ENCODE measurements at regions of chr6 and their contacts with region 1.

Region 1: DNA sequence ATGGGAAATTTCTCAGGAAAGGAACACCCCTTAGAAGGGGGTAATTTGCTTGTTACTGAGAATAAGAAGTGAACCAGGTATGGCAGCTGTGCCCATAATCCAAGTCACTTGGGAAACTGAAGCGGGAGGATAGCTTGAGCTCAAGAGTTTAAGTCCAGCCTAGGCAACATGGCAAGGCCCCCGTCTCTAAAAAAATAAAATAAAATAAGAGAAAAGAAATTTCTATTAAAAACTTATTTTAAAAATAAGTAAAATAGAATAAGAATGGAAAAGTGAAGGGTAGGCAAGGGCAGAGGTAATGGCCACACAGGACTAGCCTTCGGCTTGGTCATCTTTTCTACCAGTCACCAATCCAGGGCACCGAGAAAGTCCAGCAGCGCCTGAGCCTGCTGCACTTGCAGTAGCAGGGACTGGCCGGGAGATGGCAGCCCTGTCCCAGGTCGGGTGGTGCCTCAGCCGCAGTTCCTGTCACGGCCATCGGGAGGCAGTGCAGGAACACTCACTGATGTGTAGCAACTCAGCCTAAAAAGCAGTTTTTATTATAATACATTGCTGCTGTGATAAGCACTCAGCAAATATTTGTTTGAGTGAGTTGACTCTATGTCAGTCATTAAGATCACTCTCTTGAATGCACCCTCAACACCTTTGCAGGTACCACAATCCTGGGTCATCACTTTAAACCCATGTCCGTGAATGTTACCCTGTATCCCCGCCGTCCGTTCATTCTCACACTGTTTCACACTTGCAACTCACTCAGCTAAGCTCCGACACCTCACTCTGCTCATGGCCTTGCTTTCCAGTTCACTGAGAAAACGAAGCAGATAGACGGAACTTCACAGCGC is 23.2 kb upstream of the GCM1 start:
- DNase-seq: peak; percentile 85 to 97 (median 89)
- ATAC-seq: peak; percentile 100
- H3K4me3 ChIP-seq: no peak overlapping the region
- H3K4me3 Mint-ChIP-seq: no peak overlapping the region
- H3K27ac ChIP-seq: no peak overlapping the region
- H3K27ac Mint-ChIP-seq: no peak overlapping the region
- H3K4me1 ChIP-seq: no peaks in the 10 kb centered on the region
- H3K4me1 Mint-ChIP-seq: no peaks in the 10 kb centered on the region
- H3K27me3 ChIP-seq: no peaks in the 10 kb centered on the region
- H3K27me3 Mint-ChIP-seq: no peaks in the 10 kb centered on the region
- CTCF ChIP-seq: peak; percentile 100

Region 2: DNA sequence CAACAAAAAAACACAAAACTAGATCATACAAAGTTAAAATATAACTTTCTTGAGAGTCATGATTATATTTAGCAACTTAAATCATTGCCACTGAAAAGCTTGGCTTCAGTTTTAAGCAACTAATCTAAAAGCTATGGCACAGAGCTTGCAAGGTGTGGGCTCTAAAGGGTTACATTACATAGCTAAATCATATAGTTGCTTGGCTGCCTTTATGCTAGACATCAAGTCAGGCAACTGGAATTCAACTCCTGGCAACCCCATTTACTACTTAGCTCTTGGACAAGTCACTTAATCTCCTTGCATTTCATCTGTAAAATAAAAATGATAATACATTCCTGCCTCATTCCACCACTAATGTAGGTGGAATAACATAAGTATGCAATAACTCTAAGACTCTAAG is 17.7 kb after region 1 on chr6:
- CTCF ChIA-PET with region 1: interaction called, 12 read pairs
- POLR2A ChIA-PET with region 1: no interaction called
- intact Hi-C with region 1: no loop called
- DNase-seq: no peak
- ATAC-seq: no peak
- H3K4me3 ChIP-seq: no peak overlapping the region
- H3K4me3 Mint-ChIP-seq: no peak overlapping the region
- H3K27ac ChIP-seq: no peak overlapping the region
- H3K27ac Mint-ChIP-seq: no peak overlapping the region
- H3K4me1 ChIP-seq: peaks cover 19% of the 10 kb centered on the region
- H3K4me1 Mint-ChIP-seq: peaks cover 30% of the 10 kb centered on the region
- H3K27me3 ChIP-seq: no peaks in the 10 kb centered on the region
- H3K27me3 Mint-ChIP-seq: no peaks in the 10 kb centered on the region
- CTCF ChIP-seq: no peak

Region 3: GRCh38 chr6:53294095-53294494 is 122.3 kb after region 1 on chr6:
- CTCF ChIA-PET with region 1: interaction called, 34 read pairs
- POLR2A ChIA-PET with region 1: interaction called, 3 read pairs
- intact Hi-C with region 1: loop called (anchors 1 to 2 kb)
- DNase-seq: peak in 7 of 9 experiments; percentile 21 to 63 (median 45)
- ATAC-seq: peak; percentile 49
- H3K4me3 ChIP-seq: no peak overlapping the region
- H3K4me3 Mint-ChIP-seq: no peak overlapping the region
- H3K27ac ChIP-seq: peak overlapping the region in 1 of 2 experiments; percentile 6
- H3K27ac Mint-ChIP-seq: peak overlapping the region; percentile 10
- H3K4me1 ChIP-seq: peaks cover 34% of the 10 kb centered on the region
- H3K4me1 Mint-ChIP-seq: peaks cover 76% of the 10 kb centered on the region
- H3K27me3 ChIP-seq: no peaks in the 10 kb centered on the region
- H3K27me3 Mint-ChIP-seq: no peaks in the 10 kb centered on the region
- CTCF ChIP-seq: peak; percentile 66

Region 4: GRCh38 chr6:53398247-53399026 is 226.6 kb after region 1 on chr6:
- CTCF ChIA-PET with region 1: interaction called, 12 read pairs
- POLR2A ChIA-PET with region 1: no interaction called
- intact Hi-C with region 1: no loop called
- DNase-seq: no peak
- ATAC-seq: no peak
- H3K4me3 ChIP-seq: no peak overlapping the region
- H3K4me3 Mint-ChIP-seq: no peak overlapping the region
- H3K27ac ChIP-seq: no peak overlapping the region
- H3K27ac Mint-ChIP-seq: no peak overlapping the region
- H3K4me1 ChIP-seq: no peaks in the 10 kb centered on the region
- H3K4me1 Mint-ChIP-seq: no peaks in the 10 kb centered on the region
- H3K27me3 ChIP-seq: no peaks in the 10 kb centered on the region
- H3K27me3 Mint-ChIP-seq: peaks cover 2% of the 10 kb centered on the region
- CTCF ChIP-seq: no peak

Region 5: DNA sequence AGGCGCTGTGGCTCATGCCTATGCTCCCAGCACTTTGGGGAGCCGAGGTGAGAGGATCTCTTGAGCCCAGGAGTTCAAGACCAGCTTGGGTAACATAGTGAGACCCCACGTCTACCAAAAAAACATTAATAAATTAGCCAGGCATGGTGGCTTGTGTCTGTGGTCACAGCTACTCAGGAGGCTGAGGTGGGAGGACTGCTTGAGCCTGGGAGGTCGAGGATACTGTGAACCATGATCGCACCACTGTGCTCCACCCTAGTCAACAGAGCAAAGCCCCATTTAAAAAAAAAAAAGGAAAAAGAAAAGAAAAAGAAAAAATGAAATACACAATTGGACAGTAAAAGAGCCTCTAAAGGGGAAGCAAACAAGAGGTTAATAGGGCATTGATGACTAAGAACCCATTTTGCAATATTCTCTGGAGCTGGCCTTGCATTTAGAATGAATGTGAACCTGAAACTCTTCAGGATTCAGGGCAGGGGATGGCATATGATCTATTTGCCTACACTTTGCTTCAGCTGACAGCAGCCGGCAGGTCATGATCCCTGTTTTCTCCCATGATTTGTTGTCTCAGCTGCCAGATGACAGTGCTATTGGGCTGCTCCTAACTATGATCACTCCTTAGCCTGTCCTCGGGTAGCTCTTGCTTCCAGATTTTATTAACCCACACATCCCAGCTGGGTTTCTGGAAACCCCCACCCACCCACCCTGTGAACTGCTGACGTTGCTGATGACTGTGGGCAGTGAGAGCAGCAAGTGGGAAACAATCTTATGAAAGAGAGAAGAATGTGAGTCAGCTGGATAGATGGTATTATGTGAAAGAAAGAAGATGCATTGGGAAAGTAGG is 260.7 kb after region 1 on chr6:
- CTCF ChIA-PET with region 1: interaction called, 34 read pairs
- POLR2A ChIA-PET with region 1: no interaction called
- intact Hi-C with region 1: loop called (anchors 1 kb)
- DNase-seq: peak in 1 of 9 experiments; percentile 10
- ATAC-seq: no peak
- H3K4me3 ChIP-seq: no peak overlapping the region
- H3K4me3 Mint-ChIP-seq: no peak overlapping the region
- H3K27ac ChIP-seq: no peak overlapping the region
- H3K27ac Mint-ChIP-seq: no peak overlapping the region
- H3K4me1 ChIP-seq: no peaks in the 10 kb centered on the region
- H3K4me1 Mint-ChIP-seq: peaks cover 13% of the 10 kb centered on the region
- H3K27me3 ChIP-seq: no peaks in the 10 kb centered on the region
- H3K27me3 Mint-ChIP-seq: no peaks in the 10 kb centered on the region
- CTCF ChIP-seq: no peak

Region 6: DNA sequence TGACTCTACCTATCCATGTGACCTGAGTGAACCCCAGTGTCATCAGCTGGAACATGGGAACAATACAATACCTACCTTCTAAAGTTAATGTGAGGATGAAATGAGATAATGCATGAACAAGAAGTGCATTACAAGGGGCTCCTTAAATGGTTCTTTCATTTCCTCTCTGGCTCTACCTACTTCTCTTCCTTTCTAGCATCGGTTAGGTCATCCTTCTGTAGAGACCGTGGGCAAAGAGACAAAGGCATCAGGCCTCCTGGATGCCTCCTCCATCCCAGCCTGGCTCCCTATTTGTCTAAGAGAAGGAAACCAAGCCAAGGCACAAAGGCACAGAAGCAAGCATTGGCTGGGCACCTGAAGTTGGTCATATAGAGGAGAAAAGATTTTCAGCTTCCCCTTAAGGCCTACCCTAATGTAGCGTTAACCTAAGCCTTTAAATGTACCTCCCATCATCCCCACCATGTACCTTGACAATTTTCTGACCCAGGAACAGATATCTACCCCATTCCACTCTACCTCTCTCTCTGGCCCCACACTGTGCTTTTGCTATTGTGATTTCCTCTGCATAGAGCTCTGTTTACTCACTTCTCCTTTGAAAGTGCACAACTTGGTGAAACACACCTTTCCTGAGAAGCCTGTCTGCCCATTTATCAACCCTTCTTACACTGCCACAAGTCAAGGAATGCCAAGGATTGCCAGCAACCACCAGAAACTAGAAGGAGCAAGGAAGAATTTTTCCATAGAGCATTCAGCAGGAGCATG is 286.5 kb after region 1 on chr6:
- CTCF ChIA-PET with region 1: interaction called, 12 read pairs
- POLR2A ChIA-PET with region 1: no interaction called
- intact Hi-C with region 1: no loop called
- DNase-seq: no peak
- ATAC-seq: no peak
- H3K4me3 ChIP-seq: no peak overlapping the region
- H3K4me3 Mint-ChIP-seq: no peak overlapping the region
- H3K27ac ChIP-seq: no peak overlapping the region
- H3K27ac Mint-ChIP-seq: no peak overlapping the region
- H3K4me1 ChIP-seq: no peaks in the 10 kb centered on the region
- H3K4me1 Mint-ChIP-seq: no peaks in the 10 kb centered on the region
- H3K27me3 ChIP-seq: no peaks in the 10 kb centered on the region
- H3K27me3 Mint-ChIP-seq: no peaks in the 10 kb centered on the region
- CTCF ChIP-seq: no peak

Region 7: GRCh38 chr6:53651764-53652401 is 480.1 kb after region 1 on chr6:
- CTCF ChIA-PET with region 1: no interaction called
- POLR2A ChIA-PET with region 1: no interaction called
- intact Hi-C with region 1: loop called (anchors 2 to 10 kb)
- DNase-seq: peak; percentile 57 to 91 (median 79)
- ATAC-seq: peak; percentile 86
- H3K4me3 ChIP-seq: peak overlapping the region; percentile 67 to 81
- H3K4me3 Mint-ChIP-seq: peak overlapping the region; percentile 91
- H3K27ac ChIP-seq: peak overlapping the region; percentile 54 to 65
- H3K27ac Mint-ChIP-seq: peak overlapping the region; percentile 89
- H3K4me1 ChIP-seq: peaks cover 32% of the 10 kb centered on the region
- H3K4me1 Mint-ChIP-seq: peaks cover 32% of the 10 kb centered on the region
- H3K27me3 ChIP-seq: no peaks in the 10 kb centered on the region
- H3K27me3 Mint-ChIP-seq: no peaks in the 10 kb centered on the region
- CTCF ChIP-seq: no peak

Measured in CD8-positive, alpha-beta T cell (primary cell).